Gastrocnemius medialis (tissue), 4 donors: ENCODE measurements at regions of chr16 and their contacts with region 1.

Region 1: GRCh38 chr16:25896412-25896811 is 204.7 kb downstream of the HS3ST4 start:
- DNase-seq: no peak
- ATAC-seq: no peak
- H3K4me3 ChIP-seq: no peak overlapping the region
- H3K27ac ChIP-seq: no peak overlapping the region
- H3K4me1 ChIP-seq: no peaks in the 10 kb centered on the region
- H3K27me3 ChIP-seq: no peaks in the 10 kb centered on the region
- CTCF ChIP-seq: no peak
- POLR2A ChIP-seq: no peak

Region 2: GRCh38 chr16:25912321-25912720 is 15.9 kb after region 1 on chr16:
- in situ Hi-C with region 1: no loop called
- intact Hi-C with region 1: no loop called
- DNase-seq: no peak
- ATAC-seq: no peak
- H3K4me3 ChIP-seq: no peak overlapping the region
- H3K27ac ChIP-seq: no peak overlapping the region
- H3K4me1 ChIP-seq: no peaks in the 10 kb centered on the region
- H3K27me3 ChIP-seq: no peaks in the 10 kb centered on the region
- CTCF ChIP-seq: no peak
- POLR2A ChIP-seq: no peak

Region 3: GRCh38 chr16:25950586-25951281 is 54.3 kb after region 1 on chr16:
- in situ Hi-C with region 1: loop called in 1 of 4 experiments (anchors 10 kb)
- intact Hi-C with region 1: no loop called
- DNase-seq: no peak
- ATAC-seq: no peak
- H3K4me3 ChIP-seq: no peak overlapping the region
- H3K27ac ChIP-seq: no peak overlapping the region
- H3K4me1 ChIP-seq: no peaks in the 10 kb centered on the region
- H3K27me3 ChIP-seq: no peaks in the 10 kb centered on the region
- CTCF ChIP-seq: no peak
- POLR2A ChIP-seq: no peak